Right lobe of liver (tissue), 6 donors: ENCODE measurements at regions of chr3 and their contacts with region 1.

Region 1: DNA sequence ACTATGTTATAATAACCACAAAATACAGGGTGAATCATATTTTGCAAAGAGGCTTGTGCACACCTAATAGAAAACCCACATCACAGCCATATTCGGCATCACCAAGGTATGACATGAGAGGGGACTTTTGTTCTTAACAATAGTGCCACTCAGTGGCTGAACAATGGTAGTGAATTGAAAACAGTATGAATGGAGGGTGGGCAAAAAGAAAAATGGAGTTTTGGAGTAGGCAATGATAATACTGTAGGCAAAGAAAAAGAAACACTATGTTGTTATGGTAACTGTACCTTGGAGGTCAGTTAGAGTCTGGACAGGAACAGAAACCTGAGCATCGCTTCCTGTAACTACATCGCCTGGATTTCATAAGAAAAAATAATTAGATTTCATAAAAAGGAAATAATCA is 348.6 kb downstream of the PLCL2 start:
- DNase-seq: no peak
- ATAC-seq: peak; percentile 84 to 92 (median 88)
- H3K4me3 ChIP-seq: no peak overlapping the region
- H3K27ac ChIP-seq: no peak overlapping the region
- H3K4me1 ChIP-seq: no peaks in the 10 kb centered on the region
- H3K27me3 ChIP-seq: no peaks in the 10 kb centered on the region
- CTCF ChIP-seq: peak; percentile 69 to 71 (median 70)
- POLR2A ChIP-seq: no peak

Region 2: GRCh38 chr3:16589867-16590624 is 643.4 kb before region 1 on chr3:
- intact Hi-C with region 1: loop called in 1 of 2 experiments (anchors 10 kb)
- DNase-seq: no peak
- ATAC-seq: no peak
- H3K4me3 ChIP-seq: no peak overlapping the region
- H3K27ac ChIP-seq: no peak overlapping the region
- H3K4me1 ChIP-seq: no peaks in the 10 kb centered on the region
- H3K27me3 ChIP-seq: no peaks in the 10 kb centered on the region
- CTCF ChIP-seq: no peak
- POLR2A ChIP-seq: no peak

Region 3: GRCh38 chr3:16600780-16601539 is 632.4 kb before region 1 on chr3:
- intact Hi-C with region 1: loop called (anchors 10 kb)
- DNase-seq: peak; percentile 73 to 81 (median 79)
- ATAC-seq: peak; percentile 66 to 81 (median 78)
- H3K4me3 ChIP-seq: no peak overlapping the region
- H3K27ac ChIP-seq: no peak overlapping the region
- H3K4me1 ChIP-seq: no peaks in the 10 kb centered on the region
- H3K27me3 ChIP-seq: no peaks in the 10 kb centered on the region
- CTCF ChIP-seq: peak; percentile 82 to 89 (median 87)
- POLR2A ChIP-seq: no peak